Activated CD8-positive, alpha-beta T cell treated with anti-CD3 and anti-CD28 coated beads for 36 hours (primary cell): ENCODE measurements at regions of chr22 and their contacts with region 1.

Region 1: DNA sequence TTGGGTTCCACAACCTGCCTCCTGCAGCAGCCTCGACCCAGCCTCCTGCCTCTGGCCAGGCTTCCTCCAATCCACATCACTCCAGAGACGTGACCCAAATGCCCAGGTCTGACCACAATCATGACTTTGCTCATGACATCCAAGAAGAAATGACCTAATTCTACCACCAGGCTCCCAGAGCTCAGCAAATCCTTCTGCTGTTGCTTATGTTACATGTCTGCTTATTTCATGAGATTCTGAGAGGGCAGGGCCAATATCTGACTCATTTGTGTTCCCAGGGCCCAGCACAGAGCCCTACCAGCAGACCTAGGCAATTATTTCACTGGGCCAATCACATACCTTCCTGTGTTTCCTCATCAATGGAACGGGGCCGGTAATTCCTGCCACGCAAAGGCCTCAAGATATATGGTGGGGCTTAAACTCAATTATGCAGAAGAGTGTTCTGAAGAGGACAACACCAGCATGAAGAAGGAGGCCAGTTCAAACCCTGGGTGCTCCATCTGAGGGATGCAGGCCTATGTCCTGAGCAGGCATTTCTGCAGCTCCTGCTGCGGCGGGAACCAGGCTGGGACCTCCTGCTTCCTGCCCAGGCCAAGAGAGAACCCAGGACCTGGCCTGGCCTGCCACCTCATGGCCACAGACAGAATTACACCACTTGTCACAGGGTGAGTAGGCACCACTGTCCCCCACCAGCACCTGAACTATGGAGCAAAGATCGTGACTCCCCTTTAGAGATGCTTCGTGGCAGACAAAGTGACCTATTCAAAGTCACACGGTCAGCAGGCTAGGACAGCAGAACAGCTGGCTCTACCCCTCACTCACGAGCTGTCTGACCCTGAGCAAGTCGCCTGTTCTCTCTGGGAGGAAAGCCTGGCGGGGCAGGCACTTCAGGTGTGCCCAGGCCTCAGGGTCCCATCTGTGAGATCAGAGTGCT is 5.9 kb downstream of the CENPM start:
- DNase-seq: peak; percentile 91
- ATAC-seq: peak; percentile 75
- H3K4me3 Mint-ChIP-seq: peak overlapping the region; percentile 74
- H3K27ac Mint-ChIP-seq: peak overlapping the region; percentile 100
- H3K4me1 Mint-ChIP-seq: peaks cover 58% of the 10 kb centered on the region
- H3K27me3 Mint-ChIP-seq: no peaks in the 10 kb centered on the region
- CTCF ChIP-seq: peak; percentile 94

Region 2: DNA sequence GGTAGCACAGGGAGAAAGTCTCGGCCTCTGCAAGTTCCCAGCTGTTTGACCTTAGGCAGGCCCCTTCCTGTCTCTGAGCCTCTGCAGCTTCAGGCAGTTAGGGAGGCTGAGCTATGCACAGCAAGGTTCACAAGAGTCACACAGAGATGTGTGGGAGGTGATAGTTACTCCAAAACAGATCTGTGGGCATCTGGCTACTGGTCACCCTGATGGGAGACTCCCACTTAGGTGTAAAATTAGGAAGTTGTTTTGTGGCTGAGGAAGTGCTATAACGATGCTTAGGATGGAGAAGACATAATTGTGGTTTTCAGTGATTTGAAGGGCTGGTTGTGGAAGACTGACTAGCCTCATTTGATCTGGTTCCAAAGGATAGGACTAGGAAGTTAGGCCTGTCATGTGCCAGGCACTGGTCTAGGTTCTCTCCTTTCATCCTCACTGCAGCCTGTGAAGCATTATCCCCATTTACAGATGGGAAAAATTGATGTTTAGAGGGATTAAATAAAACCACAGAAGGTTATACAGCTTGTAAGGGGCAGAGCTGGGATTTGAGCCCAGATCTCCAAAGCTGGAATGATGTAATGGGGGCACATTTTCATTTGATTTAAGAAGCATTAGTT is 458.7 kb before region 1 on chr22:
- CTCF ChIA-PET with region 1: no interaction called
- POLR2A ChIA-PET with region 1: no interaction called
- intact Hi-C with region 1: no loop called
- DNase-seq: peak; percentile 12
- ATAC-seq: peak; percentile 42
- H3K4me3 Mint-ChIP-seq: no peak overlapping the region
- H3K27ac Mint-ChIP-seq: peak overlapping the region; percentile 7
- H3K4me1 Mint-ChIP-seq: peaks cover 46% of the 10 kb centered on the region
- H3K27me3 Mint-ChIP-seq: no peaks in the 10 kb centered on the region
- CTCF ChIP-seq: no peak

Region 3: DNA sequence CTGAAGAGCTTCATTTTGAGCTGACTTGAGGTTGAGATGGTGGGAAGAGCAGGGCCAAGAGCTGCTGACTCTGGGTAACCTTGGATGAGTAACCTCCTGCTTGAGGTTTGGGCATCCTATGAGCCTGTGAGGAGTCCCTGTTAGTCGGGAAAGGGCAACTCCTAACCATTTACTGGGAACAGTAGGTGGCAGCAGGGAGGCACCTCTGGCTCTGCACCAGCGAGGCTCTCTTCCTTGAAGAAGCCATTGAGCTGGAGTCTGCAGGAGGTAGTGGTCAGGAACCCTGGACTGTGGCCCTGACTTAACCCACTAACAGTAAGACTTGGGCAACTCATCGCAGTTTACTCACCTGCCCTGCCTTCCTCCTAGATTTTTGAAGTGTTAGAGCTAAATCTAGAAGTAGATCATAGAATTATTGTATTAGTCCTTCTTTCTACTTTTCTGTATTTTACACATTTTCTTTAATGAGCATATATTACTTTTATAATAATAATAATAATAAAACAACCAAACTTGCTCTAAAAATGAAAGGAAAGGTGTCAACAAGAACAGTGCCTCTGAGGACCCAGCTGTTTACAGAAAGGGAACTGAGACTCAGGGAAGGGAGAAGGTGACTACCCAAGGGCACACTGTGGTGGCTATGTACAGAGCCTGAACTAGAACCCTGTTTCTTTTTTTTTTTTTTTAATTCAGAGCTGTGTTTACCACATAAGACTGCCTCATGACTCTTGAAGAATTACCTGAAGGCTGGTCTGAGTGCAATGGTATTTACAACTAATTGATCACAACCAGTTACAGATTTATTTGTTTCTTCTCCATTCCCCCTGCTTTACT is 194.3 kb before region 1 on chr22:
- CTCF ChIA-PET with region 1: interaction called, 18 read pairs
- POLR2A ChIA-PET with region 1: no interaction called
- intact Hi-C with region 1: no loop called
- DNase-seq: peak; percentile 63
- ATAC-seq: peak; percentile 89
- H3K4me3 Mint-ChIP-seq: no peak overlapping the region
- H3K27ac Mint-ChIP-seq: no peak overlapping the region
- H3K4me1 Mint-ChIP-seq: peaks cover 6% of the 10 kb centered on the region
- H3K27me3 Mint-ChIP-seq: peaks cover 4% of the 10 kb centered on the region
- CTCF ChIP-seq: peak; percentile 54

Region 4: GRCh38 chr22:41800348-41801146 is 140.6 kb before region 1 on chr22 and contains the start of gene CCDC134:
- CTCF ChIA-PET with region 1: interaction called, 11 read pairs
- POLR2A ChIA-PET with region 1: interaction called, 4 read pairs
- intact Hi-C with region 1: no loop called
- DNase-seq: peak; percentile 93
- ATAC-seq: peak; percentile 98
- H3K4me3 Mint-ChIP-seq: peak within 1 kb of the TSS; percentile 89
- H3K27ac Mint-ChIP-seq: peak within 1 kb of the TSS; percentile 93
- H3K4me1 Mint-ChIP-seq: peaks cover 30% of the 10 kb centered on the region
- H3K27me3 Mint-ChIP-seq: no peaks in the 10 kb centered on the region
- CTCF ChIP-seq: no peak
- total RNA-seq, gene CCDC134: 15.2 to 15.9 TPM

Region 5: GRCh38 chr22:41832553-41833368 is 108.3 kb before region 1 on chr22 and contains the start of gene SREBF2:
- CTCF ChIA-PET with region 1: interaction called, 17 read pairs
- POLR2A ChIA-PET with region 1: interaction called, 36 read pairs
- intact Hi-C with region 1: loop called (anchors 5 kb)
- DNase-seq: peak; percentile 100
- ATAC-seq: peak; percentile 95
- H3K4me3 Mint-ChIP-seq: peak within 1 kb of the TSS; percentile 92
- H3K27ac Mint-ChIP-seq: peak within 1 kb of the TSS; percentile 100
- H3K4me1 Mint-ChIP-seq: peaks cover 47% of the 10 kb centered on the region
- H3K27me3 Mint-ChIP-seq: no peaks in the 10 kb centered on the region
- CTCF ChIP-seq: no peak
- total RNA-seq, gene SREBF2: 87.1 to 92.9 TPM

Region 6: GRCh38 chr22:41857155-41857859 is 83.8 kb before region 1 on chr22:
- CTCF ChIA-PET with region 1: interaction called, 17 read pairs
- POLR2A ChIA-PET with region 1: interaction called, 20 read pairs
- intact Hi-C with region 1: loop called (anchors 5 kb)
- DNase-seq: peak; percentile 91
- ATAC-seq: peak; percentile 73
- H3K4me3 Mint-ChIP-seq: peak overlapping the region; percentile 13
- H3K27ac Mint-ChIP-seq: peak overlapping the region; percentile 93
- H3K4me1 Mint-ChIP-seq: peaks cover 68% of the 10 kb centered on the region
- H3K27me3 Mint-ChIP-seq: no peaks in the 10 kb centered on the region
- CTCF ChIP-seq: peak; percentile 91